ENCODE measurements at regions of chrX and their contacts with region 1.

Region 1: DNA sequence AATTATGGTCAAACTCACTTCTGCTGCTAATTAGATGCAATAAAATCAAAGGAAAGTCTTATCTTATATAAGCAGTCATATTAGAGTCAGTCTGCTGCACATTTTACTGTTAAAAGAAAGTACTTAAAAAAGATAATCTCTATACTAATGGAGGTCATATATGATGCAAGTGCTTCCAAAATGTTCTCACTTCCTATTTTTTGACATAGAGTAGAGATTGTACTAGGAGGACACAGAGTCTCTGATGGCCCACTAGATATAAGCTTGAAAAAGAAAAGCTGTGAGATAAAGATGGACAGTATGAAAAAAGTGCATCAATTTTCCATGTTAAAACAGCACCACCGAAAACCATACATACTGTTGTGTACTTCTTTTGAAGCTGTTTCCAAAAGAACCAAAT is 196.9 kb downstream of the KLHL13 start:
- DNase-seq: no peak
- ATAC-seq: no peak
- H3K4me3 ChIP-seq: no peak overlapping the region
- H3K4me3 Mint-ChIP-seq: no peak overlapping the region
- H3K27ac ChIP-seq: no peak overlapping the region
- H3K27ac Mint-ChIP-seq: no peak overlapping the region
- H3K4me1 ChIP-seq: no peaks in the 10 kb centered on the region
- H3K4me1 Mint-ChIP-seq: no peaks in the 10 kb centered on the region
- H3K27me3 ChIP-seq: no peaks in the 10 kb centered on the region
- H3K27me3 Mint-ChIP-seq: no peaks in the 10 kb centered on the region
- CTCF ChIP-seq: no peak

Region 2: GRCh38 chrX:117860517-117860916 is 59.2 kb before region 1 on chrX:
- CTCF ChIA-PET with region 1: no interaction called
- POLR2A ChIA-PET with region 1: no interaction called
- intact Hi-C with region 1: loop called in 1 of 2 experiments (anchors 10 kb)
- DNase-seq: no peak
- ATAC-seq: no peak
- H3K4me3 ChIP-seq: no peak overlapping the region
- H3K4me3 Mint-ChIP-seq: no peak overlapping the region
- H3K27ac ChIP-seq: no peak overlapping the region
- H3K27ac Mint-ChIP-seq: no peak overlapping the region
- H3K4me1 ChIP-seq: no peaks in the 10 kb centered on the region
- H3K4me1 Mint-ChIP-seq: no peaks in the 10 kb centered on the region
- H3K27me3 ChIP-seq: no peaks in the 10 kb centered on the region
- H3K27me3 Mint-ChIP-seq: no peaks in the 10 kb centered on the region
- CTCF ChIP-seq: no peak

Region 3: GRCh38 chrX:118025226-118025625 is 105.5 kb after region 1 on chrX:
- CTCF ChIA-PET with region 1: no interaction called
- POLR2A ChIA-PET with region 1: no interaction called
- intact Hi-C with region 1: no loop called
- DNase-seq: no peak
- ATAC-seq: no peak
- H3K4me3 ChIP-seq: no peak overlapping the region
- H3K4me3 Mint-ChIP-seq: no peak overlapping the region
- H3K27ac ChIP-seq: no peak overlapping the region
- H3K27ac Mint-ChIP-seq: no peak overlapping the region
- H3K4me1 ChIP-seq: no peaks in the 10 kb centered on the region
- H3K4me1 Mint-ChIP-seq: no peaks in the 10 kb centered on the region
- H3K27me3 ChIP-seq: no peaks in the 10 kb centered on the region
- H3K27me3 Mint-ChIP-seq: no peaks in the 10 kb centered on the region
- CTCF ChIP-seq: no peak

Measured in CD8-positive, alpha-beta T cell (primary cell).